Activated CD4-positive, alpha-beta T cell treated with anti-CD3 and anti-CD28 coated beads, Interleukin-2, amount 10 ng/mL, durations not matched to agents 24 days and 14 days (primary cell): ENCODE measurements at regions of chr15 and their contacts with region 1.

Region 1: DNA sequence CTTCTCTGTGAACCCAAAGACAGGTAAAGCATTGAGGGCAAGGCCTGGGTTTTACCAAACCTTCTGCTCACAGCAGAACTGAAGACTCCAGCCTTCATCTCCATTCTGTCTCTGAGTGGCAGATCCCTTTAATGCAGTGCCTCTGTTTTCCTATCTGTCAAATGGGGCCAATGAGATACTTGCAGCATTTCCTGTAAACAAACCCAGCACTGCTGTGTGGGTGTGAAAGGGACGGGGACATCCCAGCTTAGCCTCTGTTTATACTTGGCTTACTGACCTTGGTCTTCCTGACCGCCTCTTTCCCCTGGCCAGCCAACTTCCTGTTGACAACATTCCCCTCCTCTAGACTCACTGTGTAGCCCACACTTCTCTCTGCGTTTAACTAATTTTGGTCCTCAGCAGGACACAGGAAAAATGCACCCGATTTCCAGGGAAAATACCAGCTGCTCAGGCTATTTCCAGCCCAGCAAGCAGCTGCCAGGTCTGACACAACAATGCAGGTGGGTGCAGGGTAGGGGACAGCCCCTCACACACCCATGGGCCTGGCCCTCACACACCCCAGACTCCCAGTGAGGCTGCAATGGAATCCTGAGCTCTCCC is 105.9 kb upstream of the HERC1 start:
- DNase-seq: peak; percentile 77
- H3K4me3 Mint-ChIP-seq: peak overlapping the region; percentile 68
- H3K27ac Mint-ChIP-seq: peak overlapping the region; percentile 86
- H3K4me1 Mint-ChIP-seq: peaks cover 40% of the 10 kb centered on the region
- H3K27me3 Mint-ChIP-seq: no peaks in the 10 kb centered on the region

Region 2: DNA sequence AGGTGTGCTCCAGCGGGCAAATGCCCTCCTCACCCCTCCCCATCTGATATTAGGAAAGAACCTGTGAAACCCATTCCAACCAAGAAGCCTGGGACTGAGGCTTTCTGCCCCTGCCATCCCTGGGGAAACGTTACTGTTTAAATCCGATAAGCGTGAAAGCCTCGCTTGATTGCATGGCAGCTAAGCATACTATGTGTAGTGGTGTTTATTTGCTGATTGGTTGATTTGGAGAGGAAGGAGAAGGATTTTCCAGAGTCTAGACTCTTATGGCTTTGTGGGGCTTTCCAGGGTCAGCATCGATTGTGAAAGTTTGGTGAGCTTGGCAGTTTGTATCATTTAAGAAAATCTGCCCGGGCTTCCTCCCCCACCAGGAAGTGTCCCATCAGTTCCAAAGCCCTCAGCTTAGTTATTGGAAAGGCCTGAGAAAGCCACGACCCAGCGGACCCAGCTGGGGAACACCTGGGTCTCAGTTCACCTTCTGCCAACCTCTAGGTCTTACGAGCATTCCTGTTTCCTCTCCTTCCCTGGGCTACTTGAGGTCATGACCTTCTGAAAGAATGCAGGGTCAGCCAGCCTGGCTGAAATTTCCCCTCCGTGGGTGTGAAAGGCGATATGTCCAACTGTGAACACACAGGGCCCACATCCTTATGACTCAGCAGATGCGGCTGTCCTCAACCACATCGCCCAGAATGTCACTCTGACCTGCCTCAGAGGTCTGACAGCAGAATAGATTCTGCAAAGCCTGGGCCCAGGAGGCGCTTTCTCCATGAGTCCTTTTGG is 43.1 kb before region 1 on chr15:
- intact Hi-C with region 1: loop called (anchors 2 kb)
- DNase-seq: peak; percentile 87
- H3K4me3 Mint-ChIP-seq: peak overlapping the region; percentile 34
- H3K27ac Mint-ChIP-seq: peak overlapping the region; percentile 67
- H3K4me1 Mint-ChIP-seq: peaks cover 70% of the 10 kb centered on the region
- H3K27me3 Mint-ChIP-seq: no peaks in the 10 kb centered on the region

Region 3: DNA sequence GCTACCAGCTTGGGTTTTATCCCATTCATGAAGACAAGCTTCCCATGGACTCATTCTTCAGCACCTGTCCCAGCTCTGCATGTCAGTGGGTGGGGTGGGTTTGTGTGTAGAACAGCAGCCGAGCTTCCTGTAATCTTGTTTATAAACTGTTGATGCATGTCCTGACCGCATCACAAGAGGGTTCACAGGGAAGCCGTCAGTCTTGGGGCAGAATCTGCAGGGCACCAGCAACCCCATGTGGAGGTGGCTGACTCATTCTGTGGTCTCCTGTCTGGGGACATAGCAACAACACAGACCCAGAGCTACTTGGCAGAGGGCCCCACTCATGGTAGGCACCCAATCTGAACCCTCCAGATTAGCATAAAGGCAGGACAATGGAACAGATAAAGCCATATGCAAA is 71.1 kb after region 1 on chr15:
- intact Hi-C with region 1: loop called (anchors 2 kb)
- DNase-seq: peak; percentile 94
- H3K4me3 Mint-ChIP-seq: peak overlapping the region; percentile 72
- H3K27ac Mint-ChIP-seq: peak overlapping the region; percentile 88
- H3K4me1 Mint-ChIP-seq: peaks cover 52% of the 10 kb centered on the region
- H3K27me3 Mint-ChIP-seq: no peaks in the 10 kb centered on the region